Gastrocnemius medialis (tissue), 4 donors: ENCODE measurements at regions of chr17 and their contacts with region 1.

Region 1: GRCh38 chr17:80866147-80866793 is 125.4 kb upstream of the CHMP6 start:
- DNase-seq: peak in 1 of 2 donors; percentile 72
- ATAC-seq: peak; percentile 54 to 90
- H3K4me3 ChIP-seq: no peak overlapping the region
- H3K27ac ChIP-seq: no peak overlapping the region
- H3K4me1 ChIP-seq: peaks cover 0 to 6% of the 10 kb centered on the region in 2 donors
- H3K27me3 ChIP-seq: no peaks in the 10 kb centered on the region
- CTCF ChIP-seq: peak; percentile 52 to 77 (median 62)
- POLR2A ChIP-seq: no peak

Region 2: GRCh38 chr17:80970044-80970761 is 103.9 kb after region 1 on chr17:
- in situ Hi-C with region 1: no loop called
- intact Hi-C with region 1: loop called (anchors 5 kb)
- DNase-seq: peak; percentile 42 to 62
- ATAC-seq: peak; percentile 25 to 51
- H3K4me3 ChIP-seq: no peak overlapping the region
- H3K27ac ChIP-seq: peak overlapping the region in 2 of 4 donors; percentile 5 to 68
- H3K4me1 ChIP-seq: peaks cover 27 to 29% of the 10 kb centered on the region in 2 donors
- H3K27me3 ChIP-seq: peaks cover 0 to 11% (median 6%) of the 10 kb centered on the region in 3 donors
- CTCF ChIP-seq: peak; percentile 41 to 77 (median 60)
- POLR2A ChIP-seq: no peak